ENCODE measurements at regions of chr2 and their contacts with region 1.

Region 1: GRCh38 chr2:71479286-71479685 is 25.9 kb downstream of the DYSF start:
- DNase-seq: no peak
- H3K4me3 ChIP-seq: no peak overlapping the region
- H3K27ac ChIP-seq: no peak overlapping the region
- H3K4me1 ChIP-seq: no peaks in the 10 kb centered on the region
- H3K27me3 ChIP-seq: 0 out of 2 replicates have a peak, but pooled peaks cover 6% of the 10 kb centered on the region
- CTCF ChIP-seq: no peak
- EP300 ChIP-seq: no peak
- RAD21 ChIP-seq: no peak

Region 2: DNA sequence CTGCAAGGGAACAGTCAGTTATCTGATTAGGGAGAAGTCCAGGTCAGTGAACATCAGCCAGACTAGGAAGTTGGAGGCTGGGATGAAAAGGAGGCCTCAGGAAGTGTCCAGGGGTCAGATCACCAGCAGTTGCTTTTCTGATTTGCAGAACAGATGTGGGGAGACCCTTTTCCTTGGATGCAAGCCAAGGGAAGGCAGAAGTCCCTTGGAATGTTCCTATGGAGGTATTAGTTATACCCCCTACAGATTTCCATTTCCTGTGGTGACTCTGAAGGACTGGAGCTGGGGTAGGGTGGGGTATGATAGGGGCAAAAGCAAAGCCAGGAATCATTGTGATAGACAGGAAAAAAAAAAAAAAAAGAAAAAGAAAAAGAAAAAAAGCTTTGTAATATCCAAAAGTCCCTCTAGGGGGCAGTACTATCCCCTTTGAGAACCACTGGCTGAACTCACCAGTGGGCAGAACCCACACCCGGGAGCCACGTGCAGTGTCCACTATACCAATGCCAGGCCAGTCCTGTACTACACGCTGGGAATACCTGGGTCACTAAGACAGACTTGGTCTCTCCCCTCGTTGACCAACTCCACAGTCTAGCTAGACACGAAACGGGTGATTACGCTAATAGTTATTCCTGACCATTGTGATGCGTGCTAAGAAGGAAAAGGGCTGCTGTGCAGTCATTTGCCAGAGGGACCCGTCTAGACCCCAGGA is 18.5 kb before region 1 on chr2:
- CTCF ChIA-PET with region 1: interaction called, 11 read pairs
- POLR2A ChIA-PET with region 1: no interaction called
- DNase-seq: peak; percentile 74
- H3K4me3 ChIP-seq: no peak overlapping the region
- H3K27ac ChIP-seq: no peak overlapping the region
- H3K4me1 ChIP-seq: peaks cover 0 to 32% of the 10 kb centered on the region in 2 experiments; a peak in 1 of 4 replicates
- H3K27me3 ChIP-seq: peaks cover 17% of the 10 kb centered on the region
- CTCF ChIP-seq: peak; percentile 73
- EP300 ChIP-seq: no peak
- RAD21 ChIP-seq: peak; percentile 47

Measured in SK-N-SH (cell line).